ENCODE measurements at regions of chr14 and their contacts with region 1.

Region 1: DNA sequence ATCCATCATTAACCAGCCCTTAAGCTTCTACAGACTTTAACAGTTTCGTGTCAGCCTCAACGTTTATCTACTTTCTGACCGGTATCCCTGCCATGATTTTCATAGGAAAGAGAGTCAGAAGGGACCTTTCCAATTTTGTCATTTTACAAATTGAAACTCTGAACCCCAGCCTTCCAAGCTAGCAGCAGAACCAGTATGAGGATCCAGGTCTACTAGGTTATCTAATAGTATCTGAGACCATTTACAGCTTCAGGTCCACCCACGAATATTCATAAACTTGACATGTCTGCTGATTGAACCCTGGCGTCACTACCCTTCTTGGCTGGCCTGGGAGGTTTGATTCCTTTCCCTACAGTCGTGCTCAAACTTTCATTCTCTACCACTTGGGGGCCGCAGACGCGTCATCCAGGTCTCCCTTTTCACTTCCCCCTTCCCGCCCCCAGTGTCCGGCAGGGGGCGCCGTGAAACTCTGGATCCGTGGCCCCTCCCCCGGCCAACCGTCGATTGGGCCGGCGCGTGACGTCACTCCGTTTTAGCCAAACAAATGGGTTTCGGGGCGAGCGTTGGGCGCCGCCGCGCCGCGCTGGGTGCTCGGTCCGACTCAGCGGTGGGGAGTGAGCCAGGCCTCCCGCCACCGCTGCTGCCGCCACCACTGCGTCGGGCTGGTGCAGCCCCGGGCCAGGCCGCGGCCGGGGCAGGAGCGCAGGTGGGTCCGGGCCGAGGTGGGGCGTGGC is at the start of gene FBXO34:
- DNase-seq: peak; percentile 99
- H3K4me3 Mint-ChIP-seq: peak within 1 kb of the TSS; percentile 86
- H3K27ac Mint-ChIP-seq: peak within 1 kb of the TSS; percentile 88
- H3K4me1 Mint-ChIP-seq: peaks cover 43% of the 10 kb centered on the region
- H3K27me3 Mint-ChIP-seq: no peaks in the 10 kb centered on the region
- total RNA-seq, gene FBXO34: 17.4 to 17.7 TPM

Region 2: GRCh38 chr14:55026793-55027561 is 244.0 kb before region 1 on chr14 and contains the starts of genes SOCS4 and WDHD1:
- CTCF ChIA-PET with region 1: no interaction called
- intact Hi-C with region 1: loop called (anchors 1 kb)
- DNase-seq: peak; percentile 97
- H3K4me3 Mint-ChIP-seq: peak within 1 kb of the TSS; percentile 96
- H3K27ac Mint-ChIP-seq: peak within 1 kb of the TSS; percentile 92
- H3K4me1 Mint-ChIP-seq: peaks cover 46% of the 10 kb centered on the region
- H3K27me3 Mint-ChIP-seq: no peaks in the 10 kb centered on the region
- total RNA-seq, gene SOCS4: 17.7 to 17.9 TPM
- total RNA-seq, gene WDHD1: 61.1 to 62.9 TPM

Region 3: DNA sequence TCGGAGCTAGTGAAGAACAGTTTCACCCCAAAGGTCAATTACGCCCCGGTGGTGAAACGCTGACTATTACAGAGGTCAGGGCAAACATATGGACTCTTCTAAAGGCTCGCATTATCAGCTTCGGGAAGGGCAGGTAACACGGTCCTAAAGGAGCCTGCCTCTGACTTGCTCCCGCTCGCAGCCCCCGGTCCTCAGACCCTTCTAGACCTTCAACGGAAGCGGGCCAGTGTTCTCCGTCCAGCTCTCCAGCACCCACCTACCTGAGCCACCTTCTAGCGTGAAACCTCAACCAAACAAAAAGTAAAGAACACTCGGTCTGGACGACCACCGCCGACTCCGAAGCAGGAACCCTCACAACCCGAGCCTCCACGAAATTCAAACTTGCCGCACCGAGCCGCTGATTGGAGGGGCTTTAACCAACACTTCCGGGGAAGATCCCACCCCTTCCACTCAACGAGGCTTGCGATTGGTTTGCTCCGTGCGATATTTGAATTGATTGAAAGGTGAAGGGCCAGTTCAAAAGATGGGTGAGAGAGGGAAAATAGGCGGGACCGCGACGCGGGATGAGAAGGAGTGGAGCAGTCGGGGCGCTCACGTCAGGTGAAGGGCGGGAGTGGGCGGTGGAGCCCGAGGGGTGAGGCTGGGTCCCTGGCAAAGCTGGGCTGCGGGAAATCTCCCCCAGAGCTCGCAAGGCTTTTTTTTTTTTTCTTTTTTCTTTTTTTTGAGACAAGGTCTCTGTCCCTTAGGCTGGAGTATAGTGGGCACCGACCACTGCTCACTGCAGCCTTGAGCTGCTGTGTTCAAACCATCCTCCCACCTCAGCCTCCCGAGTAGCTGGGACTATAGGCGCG is 79.6 kb before region 1 on chr14 and contains the start of gene DLGAP5:
- CTCF ChIA-PET with region 1: interaction called, 3 read pairs
- intact Hi-C with region 1: loop called (anchors 1 kb)
- DNase-seq: peak; percentile 97
- H3K4me3 Mint-ChIP-seq: peak within 1 kb of the TSS; percentile 99
- H3K27ac Mint-ChIP-seq: peak within 1 kb of the TSS; percentile 89
- H3K4me1 Mint-ChIP-seq: peaks cover 26% of the 10 kb centered on the region
- H3K27me3 Mint-ChIP-seq: peaks cover 2% of the 10 kb centered on the region
- total RNA-seq, gene DLGAP5: 117 to 120 TPM

Region 4: GRCh38 chr14:55301437-55302121 is 30.6 kb after region 1 on chr14:
- CTCF ChIA-PET with region 1: interaction called, 6 read pairs
- intact Hi-C with region 1: loop called (anchors 2 kb)
- DNase-seq: peak; percentile 13
- H3K4me3 Mint-ChIP-seq: no peak overlapping the region
- H3K27ac Mint-ChIP-seq: peak overlapping the region; percentile 55
- H3K4me1 Mint-ChIP-seq: peaks cover 60% of the 10 kb centered on the region
- H3K27me3 Mint-ChIP-seq: no peaks in the 10 kb centered on the region

Region 5: DNA sequence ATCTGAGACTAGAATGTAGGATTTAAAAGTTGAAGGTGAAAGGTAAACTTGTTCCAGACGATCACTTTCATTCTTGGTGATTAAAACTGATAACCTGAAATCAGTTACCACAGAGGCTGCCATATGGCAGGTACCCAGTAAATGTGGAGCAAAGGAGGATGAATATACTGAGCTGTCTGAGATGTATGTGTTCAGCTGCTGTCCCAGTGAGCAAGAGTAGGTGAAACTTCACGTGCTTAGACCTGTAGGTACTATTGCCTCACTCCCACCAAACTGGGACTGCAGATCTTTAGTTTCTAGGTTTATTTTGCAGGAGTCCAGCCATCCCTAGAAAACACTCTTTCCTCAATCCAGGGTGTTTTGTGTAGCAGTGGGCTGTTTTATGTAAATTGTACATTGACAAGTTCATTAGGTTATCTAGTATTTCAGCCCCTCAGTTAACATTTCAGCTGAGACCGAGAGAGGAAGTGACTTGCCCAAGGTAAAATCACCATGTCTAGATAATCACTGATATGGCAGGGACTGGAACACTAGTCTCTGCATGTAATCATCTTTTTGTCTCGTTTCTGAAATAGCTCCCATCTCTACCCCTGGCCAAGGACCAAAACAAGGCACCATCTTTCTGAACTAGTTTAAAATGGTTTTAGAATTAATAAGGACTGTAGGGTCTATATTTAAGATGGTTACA is 77.9 kb after region 1 on chr14:
- CTCF ChIA-PET with region 1: interaction called, 131 read pairs
- intact Hi-C with region 1: loop called (anchors 1 kb)
- DNase-seq: peak; percentile 22
- H3K4me3 Mint-ChIP-seq: no peak overlapping the region
- H3K27ac Mint-ChIP-seq: no peak overlapping the region
- H3K4me1 Mint-ChIP-seq: peaks cover 53% of the 10 kb centered on the region
- H3K27me3 Mint-ChIP-seq: no peaks in the 10 kb centered on the region

Region 6: GRCh38 chr14:55411426-55412389 is 140.7 kb after region 1 on chr14 and contains the start of gene ATG14:
- CTCF ChIA-PET with region 1: interaction called, 8 read pairs
- intact Hi-C with region 1: loop called (anchors 1 kb)
- DNase-seq: peak; percentile 87
- H3K4me3 Mint-ChIP-seq: peak within 1 kb of the TSS; percentile 81
- H3K27ac Mint-ChIP-seq: peak within 1 kb of the TSS; percentile 83
- H3K4me1 Mint-ChIP-seq: peaks cover 33% of the 10 kb centered on the region
- H3K27me3 Mint-ChIP-seq: no peaks in the 10 kb centered on the region
- total RNA-seq, gene ATG14: 4.6 to 4.9 TPM

Region 7: DNA sequence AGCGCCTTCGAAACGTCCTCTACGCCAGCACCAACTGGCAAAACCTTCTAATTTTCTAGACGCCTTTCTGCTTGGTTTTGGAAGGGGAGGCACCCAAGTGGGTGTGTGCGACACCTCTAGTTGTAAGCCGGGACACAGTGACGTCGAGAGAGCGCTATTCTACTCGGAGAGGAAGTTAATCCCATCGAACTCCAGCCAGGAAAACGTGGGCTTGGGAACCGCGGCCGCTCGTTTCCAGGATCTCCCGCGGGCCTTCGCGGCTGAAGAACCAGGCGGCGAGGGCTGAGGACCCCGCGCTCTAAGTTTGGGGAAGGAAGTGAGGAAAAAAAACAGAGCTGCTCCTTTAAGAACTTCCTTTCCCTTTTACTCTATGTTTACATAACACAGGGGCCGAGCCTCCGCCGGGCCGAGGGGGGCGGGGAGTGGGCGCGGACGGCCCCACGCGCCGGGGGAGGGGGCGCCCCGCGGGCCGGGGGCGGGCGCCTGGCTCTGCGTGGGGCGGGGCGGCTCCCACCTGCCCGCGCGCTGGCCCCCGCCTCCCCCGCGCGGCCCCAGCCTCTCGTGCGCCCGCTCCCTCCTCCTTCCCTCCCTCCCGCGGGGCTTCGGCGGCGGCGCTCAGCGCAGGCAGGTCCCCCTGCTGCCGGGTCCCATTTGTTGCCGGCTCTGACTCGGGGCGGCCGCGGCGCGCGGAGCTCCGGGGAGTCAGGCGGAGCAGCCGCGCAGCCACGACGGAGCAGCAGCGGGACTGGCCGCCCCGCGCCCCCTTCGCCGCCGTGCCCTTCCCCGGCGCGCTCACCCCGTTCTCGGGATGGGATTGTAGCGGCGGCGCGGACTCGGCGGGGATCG is 847.0 kb after region 1 on chr14 and contains the start of gene PELI2:
- CTCF ChIA-PET with region 1: no interaction called
- intact Hi-C with region 1: loop called (anchors 5 kb)
- DNase-seq: peak; percentile 70
- H3K4me3 Mint-ChIP-seq: peak within 1 kb of the TSS; percentile 86
- H3K27ac Mint-ChIP-seq: peak within 1 kb of the TSS; percentile 76
- H3K4me1 Mint-ChIP-seq: peaks cover 40% of the 10 kb centered on the region
- H3K27me3 Mint-ChIP-seq: peaks cover 17% of the 10 kb centered on the region
- total RNA-seq, gene PELI2: 6.2 to 7.8 TPM

Measured in activated naive CD4-positive, alpha-beta T cell treated with anti-CD3 and anti-CD28 coated beads for 36 hours (primary cell).